HCT116 (cell line): ENCODE measurements at regions of chr3 and their contacts with region 1.

Region 1: DNA sequence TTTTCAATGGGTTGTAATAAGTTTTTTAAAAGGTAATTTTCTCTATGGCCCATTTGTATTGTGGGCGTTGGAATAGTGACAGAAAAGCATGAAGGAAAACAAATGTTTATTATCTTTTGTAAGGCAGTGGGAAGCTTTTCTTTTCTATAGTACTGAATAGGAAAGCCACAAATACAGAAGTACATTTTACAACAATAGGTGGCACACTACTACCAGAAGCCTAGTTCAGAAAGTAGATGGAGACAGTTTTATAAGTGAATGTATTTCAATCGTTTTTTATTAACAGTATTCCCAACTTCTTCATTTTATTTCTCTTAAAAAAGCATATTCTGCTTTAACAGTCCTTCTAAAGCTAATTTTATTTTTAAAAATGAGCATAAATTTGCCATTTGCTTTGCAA is 296.7 kb downstream of the PTPRG start:
- DNase-seq: peak; percentile 7
- ATAC-seq: no peak
- H3K4me3 ChIP-seq: no peak overlapping the region
- H3K27ac ChIP-seq: no peak overlapping the region
- H3K4me1 ChIP-seq: no peaks in the 10 kb centered on the region
- H3K27me3 ChIP-seq: no peaks in the 10 kb centered on the region
- CTCF ChIP-seq: peak in 2 of 3 experiments; percentile 50 to 56; a peak in 3 of 6 replicates
- POLR2A ChIP-seq: no peak
- RAD21 ChIP-seq: peak; percentile 72

Region 2: GRCh38 chr3:62051507-62051906 is 193.5 kb after region 1 on chr3:
- CTCF ChIA-PET with region 1: interaction called, 5 read pairs
- POLR2A ChIA-PET with region 1: no interaction called
- RAD21 ChIA-PET with region 1: no interaction called
- intact Hi-C with region 1: loop called (anchors 5 kb)
- DNase-seq: peak; percentile 27
- ATAC-seq: peak; percentile 46; the same call in 1 of the 2 replicates
- H3K4me3 ChIP-seq: no peak overlapping the region
- H3K27ac ChIP-seq: no peak overlapping the region
- H3K4me1 ChIP-seq: no peaks in the 10 kb centered on the region
- H3K27me3 ChIP-seq: no peaks in the 10 kb centered on the region
- CTCF ChIP-seq: peak; percentile 19 to 60 (median 47); a peak in 5 of 6 replicates
- POLR2A ChIP-seq: no peak
- RAD21 ChIP-seq: peak; percentile 58

Region 3: GRCh38 chr3:62131592-62131991 is 273.5 kb after region 1 on chr3:
- CTCF ChIA-PET with region 1: no interaction called
- POLR2A ChIA-PET with region 1: no interaction called
- RAD21 ChIA-PET with region 1: no interaction called
- intact Hi-C with region 1: loop called (anchors 2 kb)
- DNase-seq: peak; percentile 2
- ATAC-seq: peak; percentile 68; the same call in 1 of the 2 replicates
- H3K4me3 ChIP-seq: no peak overlapping the region
- H3K27ac ChIP-seq: no peak overlapping the region
- H3K4me1 ChIP-seq: peaks cover 5 to 9% of the 10 kb centered on the region in 2 experiments; a peak in 2 of 4 replicates
- H3K27me3 ChIP-seq: no peaks in the 10 kb centered on the region
- CTCF ChIP-seq: peak; percentile 29 to 52 (median 50); a peak in 4 of 6 replicates
- POLR2A ChIP-seq: no peak
- RAD21 ChIP-seq: peak; percentile 55

Region 4: GRCh38 chr3:62188681-62189383 is 330.8 kb after region 1 on chr3:
- CTCF ChIA-PET with region 1: interaction called, 3 read pairs
- POLR2A ChIA-PET with region 1: no interaction called
- RAD21 ChIA-PET with region 1: no interaction called
- intact Hi-C with region 1: loop called (anchors 2 kb)
- DNase-seq: peak; percentile 7
- ATAC-seq: peak; percentile 93
- H3K4me3 ChIP-seq: no peak overlapping the region
- H3K27ac ChIP-seq: no peak overlapping the region
- H3K4me1 ChIP-seq: no peaks in the 10 kb centered on the region
- H3K27me3 ChIP-seq: no peaks in the 10 kb centered on the region
- CTCF ChIP-seq: peak; percentile 54 to 85 (median 70); a peak in 5 of 6 replicates
- POLR2A ChIP-seq: no peak
- RAD21 ChIP-seq: peak; percentile 84